ENCODE measurements at regions of chr17 and their contacts with region 1.

Region 1: GRCh38 chr17:77088455-77089123 is 52.2 kb upstream of the SEC14L1 start:
- DNase-seq: peak; percentile 96
- H3K4me3 ChIP-seq: peak overlapping the region; percentile 89
- H3K27ac ChIP-seq: peak overlapping the region; percentile 89
- H3K27me3 ChIP-seq: no peaks in the 10 kb centered on the region
- CTCF ChIP-seq: peak; percentile 70

Region 2: GRCh38 chr17:76868176-76868668 is 220.4 kb before region 1 on chr17 and contains the start of gene MGAT5B:
- CTCF ChIA-PET with region 1: interaction called, 20 read pairs
- POLR2A ChIA-PET with region 1: no interaction called
- DNase-seq: peak; percentile 24
- H3K4me3 ChIP-seq: peak within 1 kb of the TSS; percentile 29
- H3K27ac ChIP-seq: peak within 1 kb of the TSS; percentile 40
- H3K27me3 ChIP-seq: peaks cover 11% of the 10 kb centered on the region
- CTCF ChIP-seq: peak; percentile 53
- polyA plus RNA-seq, gene MGAT5B: 0.69 and 0.81 TPM in 2 replicates

Region 3: GRCh38 chr17:77101521-77102410 is 13.2 kb after region 1 on chr17:
- CTCF ChIA-PET with region 1: interaction called, 20 read pairs
- POLR2A ChIA-PET with region 1: no interaction called
- DNase-seq: no peak
- H3K4me3 ChIP-seq: no peak overlapping the region
- H3K27ac ChIP-seq: no peak overlapping the region
- H3K27me3 ChIP-seq: no peaks in the 10 kb centered on the region
- CTCF ChIP-seq: no peak

Region 4: DNA sequence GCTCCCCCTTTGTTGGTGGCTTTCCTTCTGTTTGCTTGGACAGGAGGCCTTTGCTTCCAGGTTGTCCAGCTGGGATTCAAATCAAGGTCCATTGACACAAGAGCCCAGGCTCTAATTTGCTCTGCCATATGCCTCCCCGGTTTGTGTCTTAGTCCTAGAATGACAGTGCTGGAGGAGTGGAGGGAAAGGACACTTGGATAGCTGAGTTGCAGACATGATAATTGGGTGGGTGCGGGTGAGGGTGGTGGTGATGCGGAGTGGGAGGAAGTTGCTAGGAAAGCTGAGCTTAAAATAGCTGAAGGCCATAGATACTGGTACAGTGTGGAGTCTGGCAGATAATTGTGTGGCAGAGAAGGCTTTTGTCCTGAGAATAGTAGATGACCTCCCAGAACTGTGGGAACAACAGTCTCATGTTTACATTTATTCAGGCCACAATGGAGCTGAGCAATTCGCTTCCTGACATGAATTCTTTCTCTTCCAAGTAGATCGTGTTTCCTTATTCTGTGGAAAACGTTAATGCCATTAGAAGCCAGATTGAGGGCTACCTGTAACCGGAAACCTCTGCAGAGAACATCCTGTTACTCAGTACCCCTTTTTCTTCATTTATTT is 76.0 kb after region 1 on chr17:
- CTCF ChIA-PET with region 1: interaction called, 16 read pairs
- POLR2A ChIA-PET with region 1: no interaction called
- DNase-seq: no peak
- H3K4me3 ChIP-seq: no peak overlapping the region
- H3K27ac ChIP-seq: peak overlapping the region; percentile 68
- H3K27me3 ChIP-seq: no peaks in the 10 kb centered on the region
- CTCF ChIP-seq: no peak

Region 5: DNA sequence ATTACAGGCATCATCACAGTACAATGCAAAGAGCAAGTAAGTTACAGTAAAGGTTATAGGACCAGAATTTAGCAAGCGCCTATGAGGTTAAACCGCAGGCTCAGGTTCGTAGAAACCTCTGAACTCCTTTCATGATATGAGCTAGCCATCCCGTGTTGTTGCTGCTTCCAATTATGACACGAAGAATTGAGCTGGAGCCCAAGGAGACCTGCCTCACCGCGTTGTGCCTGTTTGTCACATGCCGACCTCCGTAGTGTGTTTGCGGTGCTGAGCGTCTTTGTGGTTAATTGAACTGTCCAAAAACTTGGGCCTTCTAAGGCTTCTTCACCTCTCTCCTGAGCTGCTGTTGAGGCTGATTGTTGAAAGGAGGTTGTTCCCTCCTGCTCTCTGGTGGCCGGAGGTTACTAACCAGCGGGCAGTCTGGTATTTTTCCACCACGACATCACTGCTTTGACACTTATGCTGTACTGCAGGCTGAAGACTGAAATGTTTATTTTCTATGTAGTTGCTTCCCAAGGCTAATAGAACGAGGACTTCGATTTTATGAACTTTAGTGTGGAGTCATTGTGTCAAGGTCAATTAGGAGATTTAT is 119.7 kb after region 1 on chr17:
- CTCF ChIA-PET with region 1: interaction called, 16 read pairs
- POLR2A ChIA-PET with region 1: no interaction called
- DNase-seq: peak; percentile 10
- H3K4me3 ChIP-seq: no peak overlapping the region
- H3K27ac ChIP-seq: no peak overlapping the region
- H3K27me3 ChIP-seq: no peaks in the 10 kb centered on the region
- CTCF ChIP-seq: peak; percentile 27

Region 6: GRCh38 chr17:77247048-77247541 is 158.5 kb after region 1 on chr17:
- CTCF ChIA-PET with region 1: interaction called, 32 read pairs
- POLR2A ChIA-PET with region 1: no interaction called
- DNase-seq: peak; percentile 41
- H3K4me3 ChIP-seq: peak overlapping the region; percentile 62
- H3K27ac ChIP-seq: no peak overlapping the region
- H3K27me3 ChIP-seq: no peaks in the 10 kb centered on the region
- CTCF ChIP-seq: peak; percentile 91

Region 7: GRCh38 chr17:77285520-77286390 is 197.2 kb after region 1 on chr17:
- CTCF ChIA-PET with region 1: interaction called, 10 read pairs
- POLR2A ChIA-PET with region 1: interaction called, 3 read pairs
- DNase-seq: peak; percentile 50
- H3K4me3 ChIP-seq: no peak overlapping the region
- H3K27ac ChIP-seq: peak overlapping the region; percentile 89
- H3K27me3 ChIP-seq: no peaks in the 10 kb centered on the region
- CTCF ChIP-seq: no peak

Measured in AG04450 (cell line).